ENCODE measurements at regions of chr20 and their contacts with region 1.

Region 1: GRCh38 chr20:44187051-44187762 is at the start of gene JPH2:
- DNase-seq: no peak
- H3K4me3 ChIP-seq: peak within 1 kb of the TSS; percentile 62
- CTCF ChIP-seq: no peak

Region 2: DNA sequence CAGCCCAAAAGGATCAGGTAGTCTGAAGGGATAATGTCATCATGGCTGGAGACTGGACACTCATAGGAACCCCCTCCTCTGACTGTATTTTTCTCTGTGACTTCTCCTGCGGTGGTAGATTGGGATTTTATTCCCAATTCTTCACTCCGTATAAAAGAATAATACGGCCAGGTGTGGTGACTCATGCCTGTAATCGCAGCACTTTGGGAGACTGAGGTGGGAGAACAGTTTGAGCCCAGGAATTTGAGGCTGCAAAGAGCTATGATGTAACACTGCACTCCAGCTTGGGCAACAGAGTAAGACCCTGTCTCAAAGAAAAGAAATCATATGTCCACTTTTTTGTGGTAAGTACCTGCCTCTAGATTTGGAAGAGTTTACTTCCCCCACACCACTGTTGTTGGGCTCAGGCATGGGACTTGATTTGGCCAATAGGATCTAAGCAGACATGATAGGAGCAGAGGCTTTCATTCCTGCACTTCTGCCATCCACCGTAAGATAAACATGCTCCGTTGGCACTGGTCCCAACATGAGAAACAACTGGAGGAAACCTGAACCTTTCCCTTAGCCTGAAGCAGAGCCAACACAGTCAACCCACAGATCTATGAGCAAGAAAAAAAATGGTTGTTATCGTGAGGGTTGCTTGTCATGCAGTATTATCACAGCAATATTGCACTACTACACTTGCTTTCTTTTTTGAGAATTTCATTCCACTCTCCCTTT is 82.2 kb before region 1 on chr20:
- CTCF ChIA-PET with region 1: interaction called, 820 read pairs
- POLR2A ChIA-PET with region 1: no interaction called
- DNase-seq: no peak
- H3K4me3 ChIP-seq: no peak overlapping the region
- CTCF ChIP-seq: no peak

Region 3: DNA sequence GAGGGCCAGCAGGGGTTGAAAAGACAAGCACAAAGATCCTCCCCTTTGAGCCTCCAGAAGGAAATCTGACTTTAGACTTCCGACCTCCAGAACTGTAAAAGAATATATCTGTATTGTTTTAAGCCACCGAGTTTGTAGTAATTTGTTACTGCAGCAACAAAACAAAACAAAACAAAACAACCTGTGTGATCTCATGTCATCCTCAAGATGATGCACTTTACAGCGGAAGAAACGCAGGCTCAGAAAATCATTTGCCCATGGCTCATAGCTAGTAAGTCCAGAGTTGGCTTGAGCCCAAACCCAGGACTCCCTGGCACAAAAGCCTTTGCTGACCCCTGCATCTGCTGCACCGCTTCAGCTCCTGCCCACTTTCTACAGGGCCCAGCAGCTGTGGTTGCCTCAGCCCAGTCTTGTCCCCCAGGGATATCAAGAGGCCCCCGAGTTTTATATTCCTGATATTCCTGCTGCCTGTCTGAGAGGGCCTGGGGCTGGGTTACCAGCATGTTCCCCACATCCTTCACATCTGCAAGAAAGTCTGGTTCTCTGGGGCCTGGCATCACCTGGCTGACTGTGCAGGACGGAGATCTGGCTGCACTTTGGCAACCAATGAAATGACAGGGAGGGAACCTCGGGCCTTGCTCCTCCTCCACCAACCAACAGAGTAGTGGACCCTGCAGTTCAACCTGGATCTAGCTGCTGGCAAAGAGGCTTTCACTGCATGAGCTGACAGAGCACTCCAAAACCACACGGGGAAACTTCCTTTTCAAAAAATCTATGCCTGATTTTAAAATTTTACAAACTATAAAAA is 57.1 kb before region 1 on chr20:
- CTCF ChIA-PET with region 1: interaction called, 53 read pairs
- POLR2A ChIA-PET with region 1: interaction called, 3 read pairs
- DNase-seq: no peak
- H3K4me3 ChIP-seq: no peak overlapping the region
- CTCF ChIP-seq: no peak

Region 4: GRCh38 chr20:44142413-44142812 is 44.8 kb before region 1 on chr20:
- CTCF ChIA-PET with region 1: interaction called, 33 read pairs
- POLR2A ChIA-PET with region 1: interaction called, 5 read pairs
- DNase-seq: peak; percentile 44
- H3K4me3 ChIP-seq: no peak overlapping the region
- CTCF ChIP-seq: no peak

Region 5: GRCh38 chr20:44166477-44166876 is 20.7 kb before region 1 on chr20:
- CTCF ChIA-PET with region 1: interaction called, 40 read pairs
- POLR2A ChIA-PET with region 1: interaction called, 10 read pairs
- DNase-seq: no peak
- H3K4me3 ChIP-seq: no peak overlapping the region
- CTCF ChIP-seq: no peak

Region 6: GRCh38 chr20:44245977-44246376 is 58.8 kb after region 1 on chr20:
- CTCF ChIA-PET with region 1: no interaction called
- POLR2A ChIA-PET with region 1: no interaction called
- DNase-seq: no peak
- H3K4me3 ChIP-seq: no peak overlapping the region
- CTCF ChIP-seq: no peak